GM12878 (cell line): ENCODE measurements at regions of chr10 and their contacts with region 1.

Region 1: DNA sequence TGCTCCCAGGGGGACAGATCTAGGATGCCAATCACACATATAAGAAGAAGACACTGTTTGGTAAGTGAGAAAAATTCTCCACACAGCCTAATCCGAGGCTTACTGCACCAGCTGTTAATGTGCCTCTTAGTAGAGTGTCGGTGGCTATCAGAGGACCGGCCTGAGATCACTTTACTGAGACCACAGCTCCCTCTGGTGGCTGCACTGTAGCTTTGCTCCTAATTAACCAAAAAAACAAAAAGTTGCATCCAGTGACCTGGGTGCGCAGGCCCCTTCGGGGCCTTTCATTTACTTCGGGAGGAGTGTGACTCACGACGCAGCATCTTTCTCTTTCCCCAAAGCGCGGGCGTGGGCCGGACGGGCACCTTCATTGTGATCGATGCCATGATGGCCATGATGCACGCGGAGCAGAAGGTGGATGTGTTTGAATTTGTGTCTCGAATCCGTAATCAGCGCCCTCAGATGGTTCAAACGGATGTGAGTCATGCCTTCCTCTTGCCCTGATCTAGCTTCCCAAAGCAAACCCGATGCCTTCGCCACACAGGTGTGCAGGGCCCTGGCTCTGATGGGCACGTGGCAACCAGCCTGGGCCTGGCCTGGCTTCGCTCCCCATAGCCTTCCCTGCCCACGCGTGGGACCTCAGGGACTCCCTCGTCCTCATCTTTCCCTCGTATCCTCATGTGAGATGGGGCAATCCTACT is 56.7 kb downstream of the MKI67 start:
- DNase-seq: no peak
- ATAC-seq: peak; percentile 58
- H3K4me3 ChIP-seq: no peak overlapping the region
- H3K27ac ChIP-seq: no peak overlapping the region
- H3K4me1 ChIP-seq: peaks cover 11% of the 10 kb centered on the region
- H3K27me3 ChIP-seq: no peaks in the 10 kb centered on the region
- CTCF ChIP-seq: peak; percentile 67 to 91 (median 69)
- EP300 ChIP-seq: no peak
- POLR2A ChIP-seq: no peak; the same call in 1 of the 2 replicates
- RAD21 ChIP-seq: peak; percentile 87

Region 2: GRCh38 chr10:127715782-127716378 is 353.6 kb before region 1 on chr10:
- CTCF ChIA-PET with region 1: interaction called, 4 read pairs
- POLR2A ChIA-PET with region 1: no interaction called
- RAD21 ChIA-PET with region 1: interaction called, 8 read pairs
- SMC1A ChIA-PET with region 1: interaction called, 8 read pairs
- in situ Hi-C with region 1: no loop called
- intact Hi-C with region 1: loop called (anchors 1 kb)
- DNase-seq: no peak
- ATAC-seq: no peak
- H3K4me3 ChIP-seq: no peak overlapping the region
- H3K27ac ChIP-seq: no peak overlapping the region
- H3K4me1 ChIP-seq: no peaks in the 10 kb centered on the region
- H3K27me3 ChIP-seq: no peaks in the 10 kb centered on the region
- CTCF ChIP-seq: peak; percentile 16 to 49 (median 34); a peak in 4 of 6 replicates
- EP300 ChIP-seq: no peak
- POLR2A ChIP-seq: no peak
- RAD21 ChIP-seq: peak; percentile 51

Region 3: GRCh38 chr10:127906548-127907377 is 162.7 kb before region 1 on chr10 and contains the start of gene PTPRE:
- CTCF ChIA-PET with region 1: interaction called, 3 read pairs
- POLR2A ChIA-PET with region 1: no interaction called
- RAD21 ChIA-PET with region 1: interaction called, 3 read pairs
- SMC1A ChIA-PET with region 1: no interaction called
- in situ Hi-C with region 1: no loop called
- intact Hi-C with region 1: loop called (anchors 1 kb)
- DNase-seq: no peak
- ATAC-seq: peak; percentile 97
- H3K4me3 ChIP-seq: no peak within 1 kb of the TSS
- H3K27ac ChIP-seq: no peak within 1 kb of the TSS
- H3K4me1 ChIP-seq: no peaks in the 10 kb centered on the region
- H3K27me3 ChIP-seq: no peaks in the 10 kb centered on the region; a peak in 2 of 4 replicates
- CTCF ChIP-seq: peak; percentile 35 to 45 (median 39); a peak in 4 of 6 replicates
- EP300 ChIP-seq: no peak
- POLR2A ChIP-seq: no peak
- RAD21 ChIP-seq: peak; percentile 24; the same call in 1 of the 2 replicates
- polyA plus RNA-seq, gene PTPRE: 5.8 to 6.7 TPM

Region 4: DNA sequence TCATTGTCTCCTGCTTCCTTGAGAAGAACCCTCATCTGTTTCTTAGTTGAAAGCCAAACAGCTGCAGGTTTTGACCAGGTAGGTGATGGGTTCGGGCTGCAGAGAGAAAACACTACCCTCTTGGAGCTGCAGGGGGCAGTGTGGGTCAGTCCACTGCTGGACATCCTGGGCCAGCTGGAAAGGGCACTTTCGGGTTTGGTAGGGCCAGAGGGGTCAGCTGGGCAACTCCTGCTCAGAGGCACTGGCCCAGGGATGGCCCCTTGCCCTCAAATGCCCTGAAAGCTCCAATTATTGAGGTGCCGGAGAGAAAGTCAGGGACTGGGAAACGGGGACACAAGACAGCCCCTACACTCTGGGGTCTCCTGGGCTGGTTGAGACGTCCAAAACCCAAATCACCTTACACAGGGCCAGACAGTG is 33.9 kb before region 1 on chr10:
- CTCF ChIA-PET with region 1: interaction called, 277 read pairs
- POLR2A ChIA-PET with region 1: interaction called, 4 read pairs
- RAD21 ChIA-PET with region 1: interaction called, 103 read pairs
- SMC1A ChIA-PET with region 1: interaction called, 128 read pairs
- in situ Hi-C with region 1: loop called (anchors 5 kb)
- intact Hi-C with region 1: loop called (anchors 1 kb)
- DNase-seq: no peak
- ATAC-seq: peak; percentile 93
- H3K4me3 ChIP-seq: no peak overlapping the region
- H3K27ac ChIP-seq: no peak overlapping the region
- H3K4me1 ChIP-seq: no peaks in the 10 kb centered on the region
- H3K27me3 ChIP-seq: no peaks in the 10 kb centered on the region; a peak in 2 of 4 replicates
- CTCF ChIP-seq: peak; percentile 77 to 91 (median 78)
- EP300 ChIP-seq: no peak
- POLR2A ChIP-seq: no peak
- RAD21 ChIP-seq: peak; percentile 81

Region 5: DNA sequence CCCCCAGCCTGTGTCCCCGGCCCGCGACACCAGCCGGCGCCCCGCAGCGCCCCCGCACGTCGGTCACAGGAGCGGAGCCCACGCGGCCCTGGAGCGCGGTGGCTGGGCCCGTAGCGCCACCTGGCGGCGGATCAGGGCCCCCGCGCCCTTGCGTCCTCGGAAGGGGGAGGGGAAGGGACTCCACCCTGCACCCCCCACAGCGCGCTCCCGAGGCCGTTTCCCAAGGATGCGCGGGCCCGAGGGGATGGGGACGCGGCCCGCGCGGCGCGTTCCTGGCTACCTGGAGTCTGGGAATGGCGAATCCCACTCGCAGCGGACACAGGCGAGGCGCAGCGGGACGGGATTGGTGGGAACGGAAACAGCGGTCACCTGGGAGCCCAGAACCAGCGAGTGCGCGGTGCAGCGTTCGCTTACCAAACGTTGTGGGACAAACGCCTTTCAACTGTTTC is 80.6 kb after region 1 on chr10:
- CTCF ChIA-PET with region 1: interaction called, 12 read pairs
- POLR2A ChIA-PET with region 1: no interaction called
- RAD21 ChIA-PET with region 1: interaction called, 3 read pairs
- SMC1A ChIA-PET with region 1: interaction called, 3 read pairs
- in situ Hi-C with region 1: no loop called
- intact Hi-C with region 1: no loop called
- DNase-seq: no peak
- ATAC-seq: peak; percentile 94
- H3K4me3 ChIP-seq: peak overlapping the region; percentile 86
- H3K27ac ChIP-seq: no peak overlapping the region
- H3K4me1 ChIP-seq: peaks cover 8% of the 10 kb centered on the region
- H3K27me3 ChIP-seq: no peaks in the 10 kb centered on the region; a peak in 1 of 4 replicates
- CTCF ChIP-seq: peak; percentile 80 to 99 (median 90)
- EP300 ChIP-seq: no peak
- POLR2A ChIP-seq: no peak
- RAD21 ChIP-seq: peak; percentile 93

Region 6: DNA sequence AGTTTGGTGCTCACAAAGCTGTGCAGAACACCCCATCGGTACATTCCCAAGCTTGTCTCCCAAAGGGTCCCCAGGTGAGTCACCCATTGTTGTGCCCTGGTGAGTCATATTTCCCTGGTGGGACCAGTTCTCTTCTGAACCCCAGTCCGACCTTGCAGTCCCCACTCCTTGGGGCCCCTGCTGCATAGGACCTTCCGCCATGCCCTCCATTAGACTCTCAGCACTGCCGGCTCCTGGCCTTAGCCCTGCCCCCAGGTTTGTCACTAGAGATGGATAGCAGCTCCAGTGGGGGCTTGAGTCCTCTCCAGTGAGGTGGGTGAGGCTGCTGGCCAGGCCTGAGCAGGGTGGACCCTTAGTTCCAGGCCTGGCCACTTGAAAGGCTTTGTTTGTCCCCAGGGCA is 137.2 kb after region 1 on chr10:
- CTCF ChIA-PET with region 1: no interaction called
- POLR2A ChIA-PET with region 1: no interaction called
- RAD21 ChIA-PET with region 1: no interaction called
- SMC1A ChIA-PET with region 1: no interaction called
- in situ Hi-C with region 1: no loop called
- intact Hi-C with region 1: no loop called
- DNase-seq: no peak
- ATAC-seq: no peak
- H3K4me3 ChIP-seq: no peak overlapping the region
- H3K27ac ChIP-seq: no peak overlapping the region
- H3K4me1 ChIP-seq: no peaks in the 10 kb centered on the region
- H3K27me3 ChIP-seq: peaks cover 0 to 4% of the 10 kb centered on the region in 2 experiments; a peak in 2 of 4 replicates
- CTCF ChIP-seq: no peak
- EP300 ChIP-seq: no peak
- POLR2A ChIP-seq: no peak
- RAD21 ChIP-seq: no peak